Activated T-helper 1 cell treated with anti-CD3 and anti-CD28 coated beads, Interleukin-12 subunit alpha, Interleukin-12 subunit beta, Interleukin-2, Interleukin-4 antibody, amounts not matched to agents 30 ng/mL and 10 ng/mL and 1 ng/mL, durations not matched to agents 14 hours and 24 hours and 36 hours (primary cell): ENCODE measurements at regions of chr12 and their contacts with region 1.

Region 1: GRCh38 chr12:127677537-127678131 is 589.3 kb upstream of the TMEM132C start:
- DNase-seq: peak; percentile 21
- H3K4me3 Mint-ChIP-seq: no peak overlapping the region
- H3K27ac Mint-ChIP-seq: no peak overlapping the region
- H3K4me1 Mint-ChIP-seq: no peaks in the 10 kb centered on the region
- H3K27me3 Mint-ChIP-seq: no peaks in the 10 kb centered on the region

Region 2: DNA sequence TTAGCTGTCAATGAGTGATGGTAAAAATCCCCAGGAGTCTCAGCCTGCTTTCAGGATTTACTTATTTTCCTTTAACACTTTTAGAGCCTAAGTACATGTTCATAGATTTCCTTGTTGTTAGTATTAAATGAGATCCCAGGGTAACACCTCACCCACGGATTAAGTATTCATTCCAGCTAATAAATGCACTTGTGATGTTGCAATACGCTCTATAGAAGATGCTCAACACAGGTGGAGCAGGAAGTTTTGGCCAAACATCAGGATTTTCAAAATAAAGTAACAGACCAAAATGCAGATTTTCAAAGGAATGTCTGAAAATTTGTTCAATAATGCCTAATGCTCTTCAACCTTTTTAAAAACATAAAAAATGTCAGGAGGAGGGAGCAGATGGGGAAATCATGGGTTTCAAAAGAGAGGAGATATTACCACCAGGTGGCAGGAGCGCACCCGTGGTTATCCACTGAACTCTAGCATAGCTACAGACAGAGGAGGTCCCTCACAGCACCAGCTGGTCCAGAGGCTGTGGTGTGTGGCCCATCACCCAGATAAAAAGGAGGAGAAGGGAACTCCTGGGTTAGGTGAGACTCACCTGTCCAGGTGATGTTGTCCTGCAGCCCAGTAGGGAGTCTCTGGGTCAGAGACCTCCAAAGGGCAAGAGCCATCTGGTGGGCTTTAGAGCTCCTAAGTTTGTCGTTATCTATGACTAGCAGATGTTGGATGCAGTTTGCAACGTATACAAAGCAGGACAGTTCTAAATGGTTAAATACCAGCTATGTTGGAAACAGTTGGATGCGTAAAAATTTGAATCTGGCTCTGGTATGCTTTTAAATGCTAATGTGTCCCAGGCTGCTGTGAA is 569.0 kb before region 1 on chr12:
- intact Hi-C with region 1: loop called (anchors 1 kb)
- DNase-seq: peak; percentile 16
- H3K4me3 Mint-ChIP-seq: no peak overlapping the region
- H3K27ac Mint-ChIP-seq: no peak overlapping the region
- H3K4me1 Mint-ChIP-seq: peaks cover 6% of the 10 kb centered on the region
- H3K27me3 Mint-ChIP-seq: peaks cover 6% of the 10 kb centered on the region

Region 3: GRCh38 chr12:127280393-127281275 is 397.0 kb before region 1 on chr12:
- intact Hi-C with region 1: loop called (anchors 1 kb)
- DNase-seq: peak; percentile 58
- H3K4me3 Mint-ChIP-seq: no peak overlapping the region
- H3K27ac Mint-ChIP-seq: no peak overlapping the region
- H3K4me1 Mint-ChIP-seq: peaks cover 7% of the 10 kb centered on the region
- H3K27me3 Mint-ChIP-seq: no peaks in the 10 kb centered on the region

Region 4: GRCh38 chr12:127485528-127485927 is 192.1 kb before region 1 on chr12:
- intact Hi-C with region 1: loop called (anchors 1 kb)
- DNase-seq: peak; percentile 48
- H3K4me3 Mint-ChIP-seq: no peak overlapping the region
- H3K27ac Mint-ChIP-seq: no peak overlapping the region
- H3K4me1 Mint-ChIP-seq: peaks cover 14% of the 10 kb centered on the region
- H3K27me3 Mint-ChIP-seq: no peaks in the 10 kb centered on the region

Region 5: GRCh38 chr12:127790376-127790775 is 112.7 kb after region 1 on chr12:
- intact Hi-C with region 1: no loop called
- DNase-seq: no peak
- H3K4me3 Mint-ChIP-seq: no peak overlapping the region
- H3K27ac Mint-ChIP-seq: no peak overlapping the region
- H3K4me1 Mint-ChIP-seq: no peaks in the 10 kb centered on the region
- H3K27me3 Mint-ChIP-seq: no peaks in the 10 kb centered on the region